ENCODE measurements at regions of chr19 and their contacts with region 1.

Region 1: DNA sequence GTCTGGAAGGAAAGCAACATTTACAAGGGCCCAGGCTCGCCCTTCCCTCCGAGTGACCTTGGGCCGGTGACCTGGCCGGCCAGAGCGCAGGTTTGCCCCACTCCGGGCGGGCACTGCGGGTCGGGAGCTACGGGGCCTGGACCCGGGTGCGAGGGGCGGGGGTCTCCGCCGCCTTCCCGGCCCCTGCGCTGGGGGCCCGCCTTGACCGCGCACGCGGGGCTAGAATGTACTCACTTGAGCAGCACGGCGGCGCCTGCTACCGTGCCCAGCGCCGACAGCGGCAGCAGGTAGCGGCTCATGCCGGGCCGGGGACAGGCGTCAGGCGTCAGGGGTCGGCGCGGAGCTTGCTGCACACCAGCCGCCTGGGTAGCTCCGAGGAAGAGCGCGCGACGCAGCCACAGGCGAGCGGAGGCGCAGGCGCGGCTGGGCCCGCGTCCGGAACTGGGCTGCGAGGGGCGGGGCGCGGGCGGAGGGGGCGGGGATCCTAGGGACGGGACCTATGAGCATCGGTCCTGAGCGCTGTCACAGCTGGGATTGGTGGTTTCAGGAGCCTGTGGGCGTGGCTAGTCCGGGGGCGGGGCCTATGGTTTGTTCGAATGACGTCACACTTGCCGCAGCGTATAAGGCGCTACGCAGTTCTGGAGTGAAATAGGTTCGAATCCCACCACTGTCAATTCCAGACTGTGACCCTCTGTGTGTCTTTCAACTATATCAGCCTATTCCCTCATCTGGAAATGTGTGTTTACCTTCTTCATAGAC is at the start of gene RDH13:
- DNase-seq: peak; percentile 97 to 99
- ATAC-seq: peak; percentile 98 to 100 (median 98)
- H3K4me3 ChIP-seq: peak within 1 kb of the TSS; percentile 47
- H3K4me3 Mint-ChIP-seq: peak within 1 kb of the TSS; percentile 92
- H3K27ac ChIP-seq: peak within 1 kb of the TSS; percentile 71
- H3K27ac Mint-ChIP-seq: peak within 1 kb of the TSS; percentile 64 to 82
- H3K4me1 ChIP-seq: peaks cover 20% of the 10 kb centered on the region
- H3K4me1 Mint-ChIP-seq: peaks cover 4 to 17% of the 10 kb centered on the region in 2 donors
- H3K27me3 ChIP-seq: peaks cover 2% of the 10 kb centered on the region
- H3K27me3 Mint-ChIP-seq: peaks cover 16 to 18% of the 10 kb centered on the region in 2 donors
- CTCF ChIP-seq: no peak
- total RNA-seq, gene RDH13: 18.2 to 25.3 (median 19.3) TPM

Region 2: DNA sequence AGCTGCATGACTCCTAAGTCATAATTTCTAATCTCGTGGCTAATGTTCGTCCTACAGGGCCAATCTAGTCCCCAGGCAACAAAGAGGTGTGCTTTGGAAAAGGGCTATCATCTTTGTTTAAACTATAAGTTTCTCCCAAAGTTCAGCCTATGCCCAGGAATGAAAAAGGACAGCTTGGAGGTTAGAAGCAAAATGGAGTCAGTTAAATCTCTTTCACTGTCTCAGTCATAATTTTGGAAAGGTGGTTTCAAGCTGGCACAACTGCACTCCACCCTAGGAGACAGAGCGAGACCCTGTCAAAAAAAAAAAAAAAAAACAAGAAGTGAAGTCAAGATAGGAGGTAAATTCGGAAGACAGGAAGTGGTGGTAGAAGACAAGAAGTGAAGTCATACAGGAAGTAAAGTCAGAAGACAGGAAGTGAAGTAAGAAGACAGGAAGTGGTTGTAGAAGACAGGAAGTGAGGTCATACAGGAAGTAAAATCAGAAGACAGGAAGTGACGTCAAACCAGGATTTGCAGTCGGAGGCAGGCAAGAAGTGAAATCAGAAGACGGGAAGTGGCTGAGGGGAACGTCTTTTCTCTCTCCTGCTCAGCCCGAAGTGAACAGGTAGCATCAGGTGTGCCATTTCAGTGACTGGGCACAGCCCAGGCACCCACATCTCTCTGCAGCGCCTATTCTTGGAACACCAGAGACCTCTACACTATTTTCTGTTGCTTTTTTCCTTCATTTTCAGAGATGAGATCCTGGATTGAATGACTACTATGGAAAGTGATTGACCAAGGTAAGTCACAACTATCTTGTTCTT is 57.0 kb before region 1 on chr19:
- intact Hi-C with region 1: loop called (anchors 5 kb)
- DNase-seq: peak; percentile 53 to 92
- ATAC-seq: peak; percentile 90 to 94 (median 93)
- H3K4me3 ChIP-seq: peak overlapping the region; percentile 58
- H3K4me3 Mint-ChIP-seq: peak overlapping the region; percentile 79
- H3K27ac ChIP-seq: peak overlapping the region; percentile 87
- H3K27ac Mint-ChIP-seq: peak overlapping the region; percentile 75 to 83
- H3K4me1 ChIP-seq: peaks cover 20% of the 10 kb centered on the region
- H3K4me1 Mint-ChIP-seq: peaks cover 38 to 41% of the 10 kb centered on the region in 2 donors
- H3K27me3 ChIP-seq: no peaks in the 10 kb centered on the region
- H3K27me3 Mint-ChIP-seq: no peaks in the 10 kb centered on the region
- CTCF ChIP-seq: no peak

Region 3: DNA sequence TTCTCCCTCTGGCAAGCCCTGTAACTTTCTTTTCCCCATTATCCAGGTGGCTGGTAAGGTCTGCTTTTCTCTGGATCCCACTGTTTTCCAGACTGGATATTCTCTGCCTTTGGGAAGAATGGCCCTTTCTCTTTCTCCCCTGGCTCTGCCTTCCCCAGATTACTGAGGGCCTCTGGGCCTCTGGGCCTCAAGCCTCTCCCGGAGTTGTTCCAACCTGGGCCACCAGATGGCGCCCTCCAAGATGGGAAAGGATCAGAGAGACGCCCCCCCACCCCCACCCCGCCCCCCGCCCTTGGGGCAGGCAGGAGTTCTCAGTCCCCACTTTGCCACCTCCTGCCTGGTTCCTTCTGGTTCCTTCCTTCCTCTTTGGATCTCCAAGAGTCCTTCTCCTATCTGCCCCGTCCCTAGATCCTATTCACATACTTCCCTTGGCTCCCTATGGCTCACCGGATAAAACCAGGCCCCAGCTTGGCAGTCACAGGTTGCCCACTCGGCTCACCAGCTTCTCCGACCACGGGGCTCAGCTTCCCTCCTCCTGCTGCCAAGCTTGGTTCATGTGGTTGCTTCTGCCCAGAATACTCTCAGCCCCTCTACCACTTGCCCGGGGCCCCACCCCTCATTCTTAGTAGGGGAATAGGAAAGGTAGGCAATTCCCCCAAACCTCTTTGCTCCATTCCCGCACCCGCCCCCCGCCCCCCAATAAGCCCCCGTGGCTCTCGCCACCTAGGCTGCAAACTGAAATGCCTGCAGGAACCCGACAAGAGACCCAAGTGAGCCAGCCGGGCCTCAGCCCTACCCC is 25.8 kb after region 1 on chr19:
- intact Hi-C with region 1: no loop called
- DNase-seq: peak; percentile 77 to 84
- ATAC-seq: peak in 2 of 3 donors; percentile 51 to 60
- H3K4me3 ChIP-seq: no peak overlapping the region
- H3K4me3 Mint-ChIP-seq: peak overlapping the region; percentile 89
- H3K27ac ChIP-seq: no peak overlapping the region
- H3K27ac Mint-ChIP-seq: peak overlapping the region; percentile 46 to 81
- H3K4me1 ChIP-seq: peaks cover 25% of the 10 kb centered on the region
- H3K4me1 Mint-ChIP-seq: peaks cover 20 to 31% of the 10 kb centered on the region in 2 donors
- H3K27me3 ChIP-seq: peaks cover 21% of the 10 kb centered on the region
- H3K27me3 Mint-ChIP-seq: peaks cover 20 to 34% of the 10 kb centered on the region in 2 donors
- CTCF ChIP-seq: peak; percentile 86

Measured in natural killer cell (primary cell).